HAP-1 (cell line): ENCODE measurements at regions of chr22 and their contacts with region 1.

Region 1: DNA sequence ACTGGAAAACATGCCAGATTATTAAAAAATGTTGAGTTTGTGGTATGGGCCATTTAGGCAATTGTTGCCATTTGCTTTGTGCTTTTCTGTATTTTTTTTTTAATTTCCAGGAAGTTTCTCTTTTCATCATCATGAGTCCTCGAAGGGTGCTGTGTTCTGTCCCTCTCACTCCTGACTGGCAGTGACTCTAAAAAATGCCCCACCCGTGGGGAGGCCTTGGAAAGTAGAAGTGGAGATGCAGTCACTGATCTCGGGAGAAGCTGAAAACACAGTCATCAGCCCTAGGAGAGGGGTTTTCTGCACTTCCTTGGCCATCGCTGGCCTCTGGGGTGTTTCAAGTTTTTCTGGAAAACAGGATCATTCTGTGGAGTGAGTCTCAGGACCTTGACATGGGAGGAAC is 98.5 kb upstream of the GRK3 start:
- DNase-seq: no peak
- H3K4me3 ChIP-seq: no peak overlapping the region
- H3K4me1 ChIP-seq: no peaks in the 10 kb centered on the region
- H3K27me3 ChIP-seq: no peaks in the 10 kb centered on the region

Region 2: GRCh38 chr22:25525376-25525775 is 59.4 kb after region 1 on chr22:
- in situ Hi-C with region 1: no loop called
- DNase-seq: no peak
- H3K4me3 ChIP-seq: no peak overlapping the region
- H3K4me1 ChIP-seq: no peaks in the 10 kb centered on the region
- H3K27me3 ChIP-seq: no peaks in the 10 kb centered on the region

Region 3: DNA sequence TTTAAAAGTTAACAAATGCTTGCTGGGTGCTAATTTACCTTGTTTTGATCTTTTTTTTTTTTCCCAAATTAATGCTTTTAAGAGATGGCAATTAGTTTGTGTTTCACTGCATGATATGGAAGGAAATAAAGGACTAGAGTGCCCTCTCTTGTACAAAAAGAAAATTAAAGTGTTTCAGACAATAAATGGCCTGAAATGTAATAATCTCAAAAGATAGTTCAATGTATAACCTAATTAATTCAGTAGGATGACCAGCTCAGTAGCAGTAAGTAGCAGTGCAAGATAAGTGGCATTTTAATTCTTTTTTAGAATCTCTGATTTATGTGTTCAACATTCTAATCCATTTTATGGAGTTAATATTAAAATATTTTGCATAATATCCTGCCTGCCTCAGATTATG is 236.1 kb after region 1 on chr22:
- in situ Hi-C with region 1: loop called (anchors 10 kb)
- DNase-seq: peak in 1 of 2 experiments; percentile 18
- H3K4me3 ChIP-seq: no peak overlapping the region
- H3K4me1 ChIP-seq: no peaks in the 10 kb centered on the region
- H3K27me3 ChIP-seq: no peaks in the 10 kb centered on the region